ENCODE measurements at regions of chrX and their contacts with region 1.

Region 1: GRCh38 chrX:73562984-73563737 is at the start of gene CHIC1:
- DNase-seq: peak; percentile 85
- ATAC-seq: peak; percentile 67
- H3K4me3 ChIP-seq: peak within 1 kb of the TSS; percentile 58 to 77 (median 71)
- H3K4me3 Mint-ChIP-seq: peak within 1 kb of the TSS; percentile 93
- H3K27ac ChIP-seq: peak within 1 kb of the TSS; percentile 85 to 92
- H3K27ac Mint-ChIP-seq: peak within 1 kb of the TSS; percentile 99
- H3K4me1 ChIP-seq: peaks cover 7 to 13% of the 10 kb centered on the region in 2 donors
- H3K4me1 Mint-ChIP-seq: peaks cover 23% of the 10 kb centered on the region
- H3K27me3 ChIP-seq: no peaks in the 10 kb centered on the region
- H3K27me3 Mint-ChIP-seq: no peaks in the 10 kb centered on the region
- CTCF ChIP-seq: no peak
- total RNA-seq, gene CHIC1: 18.8 and 21.4 TPM in 2 replicates

Region 2: DNA sequence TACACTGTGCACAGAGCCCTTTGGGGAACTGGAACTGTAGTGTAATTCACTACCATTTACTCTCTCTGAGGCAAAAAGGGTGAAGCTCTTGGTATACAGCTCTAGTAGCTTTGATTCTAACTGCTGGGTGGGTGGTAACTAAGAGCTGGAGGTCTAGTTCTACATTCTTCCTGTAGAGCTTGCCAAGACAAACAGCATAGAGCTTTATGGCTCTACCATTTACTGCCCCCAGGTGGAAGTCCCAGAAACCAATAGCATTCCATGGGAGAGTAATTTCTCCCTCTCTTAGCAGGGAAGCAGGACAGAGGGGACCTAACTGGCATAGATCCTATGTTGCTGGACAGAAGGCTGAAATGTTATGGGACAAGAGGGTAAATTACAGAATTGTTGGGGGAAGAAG is 1017.2 kb before region 1 on chrX:
- CTCF ChIA-PET with region 1: no interaction called
- POLR2A ChIA-PET with region 1: no interaction called
- intact Hi-C with region 1: no loop called
- DNase-seq: no peak
- ATAC-seq: no peak
- H3K4me3 ChIP-seq: no peak overlapping the region
- H3K4me3 Mint-ChIP-seq: no peak overlapping the region
- H3K27ac ChIP-seq: no peak overlapping the region
- H3K27ac Mint-ChIP-seq: no peak overlapping the region
- H3K4me1 ChIP-seq: no peaks in the 10 kb centered on the region
- H3K4me1 Mint-ChIP-seq: no peaks in the 10 kb centered on the region
- H3K27me3 ChIP-seq: no peaks in the 10 kb centered on the region
- H3K27me3 Mint-ChIP-seq: no peaks in the 10 kb centered on the region
- CTCF ChIP-seq: no peak

Region 3: DNA sequence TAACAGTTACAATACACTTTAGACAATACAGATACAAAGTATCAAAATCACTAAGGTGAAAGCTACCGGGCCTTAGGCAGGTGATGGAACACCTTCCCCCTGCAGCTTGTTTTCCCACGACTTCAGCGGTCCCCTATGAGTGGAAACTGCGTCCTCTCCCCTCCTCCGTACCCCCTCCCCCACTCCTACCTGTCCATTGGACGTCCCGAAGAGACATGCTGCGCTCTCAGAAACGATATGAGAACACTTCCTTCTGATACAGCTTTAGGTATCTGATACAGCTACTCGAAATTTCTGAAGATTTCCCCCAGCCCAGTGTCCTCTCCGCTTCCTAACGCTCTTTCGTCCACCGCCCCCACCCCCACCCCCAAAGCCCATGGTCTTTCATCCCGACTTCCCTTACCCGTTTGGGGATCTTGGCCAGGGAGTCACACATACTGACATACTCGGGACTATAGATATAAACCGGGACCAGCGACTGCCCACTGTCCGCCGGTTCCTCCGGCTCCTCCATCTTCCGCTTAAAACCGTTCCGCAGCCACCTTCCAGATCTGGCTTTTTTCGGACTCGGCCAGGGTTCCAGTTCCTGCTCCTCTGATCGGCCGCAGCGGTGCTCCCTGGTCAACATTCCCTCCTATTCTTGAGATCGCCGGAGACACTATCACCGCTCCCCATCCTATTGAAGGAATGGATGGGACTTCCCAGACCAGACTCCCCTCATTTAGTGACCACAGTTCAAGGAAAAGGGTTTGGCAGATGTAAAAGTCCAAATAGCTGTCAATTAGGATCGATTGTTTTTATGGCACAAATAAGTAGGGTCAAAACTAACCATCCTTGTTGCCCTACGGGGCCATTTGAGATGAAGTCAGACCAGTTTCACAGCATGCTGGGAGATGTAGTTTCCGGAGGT is 990.7 kb before region 1 on chrX and contains the start of gene HDAC8:
- CTCF ChIA-PET with region 1: no interaction called
- POLR2A ChIA-PET with region 1: no interaction called
- intact Hi-C with region 1: loop called (anchors 5 kb)
- DNase-seq: peak; percentile 71
- ATAC-seq: peak; percentile 86
- H3K4me3 ChIP-seq: peak within 1 kb of the TSS; percentile 65 to 84 (median 82)
- H3K4me3 Mint-ChIP-seq: peak within 1 kb of the TSS; percentile 99
- H3K27ac ChIP-seq: peak within 1 kb of the TSS; percentile 50 to 75
- H3K27ac Mint-ChIP-seq: peak within 1 kb of the TSS; percentile 93
- H3K4me1 ChIP-seq: peaks cover 0 to 6% of the 10 kb centered on the region in 2 donors
- H3K4me1 Mint-ChIP-seq: peaks cover 12% of the 10 kb centered on the region
- H3K27me3 ChIP-seq: no peaks in the 10 kb centered on the region
- H3K27me3 Mint-ChIP-seq: peaks cover 18% of the 10 kb centered on the region
- CTCF ChIP-seq: no peak
- total RNA-seq, gene HDAC8: 41.9 and 47.0 TPM in 2 replicates

Region 4: DNA sequence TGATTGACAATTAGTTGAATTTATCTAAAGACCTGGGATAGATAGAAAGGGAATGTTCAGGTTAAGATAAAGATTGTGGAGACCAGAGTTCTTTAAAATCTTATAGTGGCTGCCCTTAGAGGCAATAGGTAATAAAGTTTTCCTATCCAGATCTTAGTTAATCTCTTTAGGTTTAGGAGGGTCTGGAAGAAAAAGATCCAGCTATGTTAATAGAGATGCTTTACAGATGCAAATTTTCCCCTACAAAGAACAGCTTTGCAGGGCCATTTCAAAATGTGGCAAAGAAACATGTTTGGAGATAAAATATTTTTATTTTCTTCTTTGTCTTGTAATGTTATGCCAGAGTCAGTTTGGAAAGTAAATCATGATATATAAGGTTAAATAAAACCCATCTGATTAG is 54.3 kb before region 1 on chrX:
- CTCF ChIA-PET with region 1: no interaction called
- POLR2A ChIA-PET with region 1: no interaction called
- intact Hi-C with region 1: no loop called
- DNase-seq: no peak
- ATAC-seq: no peak
- H3K4me3 ChIP-seq: no peak overlapping the region
- H3K4me3 Mint-ChIP-seq: no peak overlapping the region
- H3K27ac ChIP-seq: no peak overlapping the region
- H3K27ac Mint-ChIP-seq: no peak overlapping the region
- H3K4me1 ChIP-seq: no peaks in the 10 kb centered on the region
- H3K4me1 Mint-ChIP-seq: no peaks in the 10 kb centered on the region
- H3K27me3 ChIP-seq: no peaks in the 10 kb centered on the region
- H3K27me3 Mint-ChIP-seq: no peaks in the 10 kb centered on the region
- CTCF ChIP-seq: no peak

Region 5: DNA sequence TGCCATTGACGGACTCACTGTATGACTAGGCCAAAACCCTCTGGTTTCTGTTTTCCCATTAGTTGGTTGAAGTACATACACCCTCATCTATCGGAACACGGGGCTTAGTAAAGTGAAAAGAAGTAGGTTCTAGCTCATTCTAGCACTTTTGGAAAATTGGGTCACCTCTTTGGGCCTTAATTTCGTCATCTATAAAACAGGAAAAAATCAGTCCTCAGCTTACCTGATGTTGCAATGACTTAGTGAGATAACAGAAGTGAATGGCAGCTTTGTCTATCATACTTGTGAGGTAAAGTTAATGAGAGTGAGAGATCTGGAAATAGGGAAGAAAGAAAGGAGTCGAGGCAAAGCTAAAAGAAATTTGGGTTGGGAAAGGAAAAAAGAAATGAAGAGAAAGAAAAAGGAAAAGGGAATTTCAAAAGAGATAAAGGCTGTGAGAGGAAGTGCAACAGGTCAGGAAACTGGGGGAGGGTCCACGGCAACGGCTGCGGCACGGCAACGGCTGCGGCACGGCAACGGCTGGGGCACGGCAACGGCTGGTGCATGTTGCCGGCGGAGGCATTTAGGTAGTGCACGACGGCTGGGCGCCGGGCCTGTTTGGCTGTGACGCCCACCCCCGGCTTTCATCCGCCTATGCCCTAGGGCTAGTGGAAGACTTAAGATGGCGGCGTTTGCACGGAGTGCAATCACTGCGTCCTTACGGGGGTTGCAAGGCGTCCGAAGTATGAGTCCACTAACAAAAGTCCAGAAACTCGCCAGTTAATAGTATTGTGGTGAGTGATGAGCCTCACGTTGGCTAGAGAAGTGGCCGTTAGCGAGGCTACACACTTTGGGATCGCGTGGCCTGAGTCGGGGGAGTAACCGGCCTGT is 380.8 kb after region 1 on chrX:
- CTCF ChIA-PET with region 1: no interaction called
- POLR2A ChIA-PET with region 1: no interaction called
- intact Hi-C with region 1: loop called (anchors 2 kb)
- DNase-seq: peak; percentile 87
- ATAC-seq: peak; percentile 99
- H3K4me3 ChIP-seq: peak overlapping the region; percentile 72 to 98 (median 95)
- H3K4me3 Mint-ChIP-seq: peak overlapping the region; percentile 97
- H3K27ac ChIP-seq: peak overlapping the region; percentile 65 to 86
- H3K27ac Mint-ChIP-seq: peak overlapping the region; percentile 95
- H3K4me1 ChIP-seq: peaks cover 7 to 16% of the 10 kb centered on the region in 2 donors
- H3K4me1 Mint-ChIP-seq: peaks cover 23% of the 10 kb centered on the region
- H3K27me3 ChIP-seq: no peaks in the 10 kb centered on the region
- H3K27me3 Mint-ChIP-seq: no peaks in the 10 kb centered on the region
- CTCF ChIP-seq: no peak

Region 6: GRCh38 chrX:73987166-73987565 is 424.0 kb after region 1 on chrX:
- CTCF ChIA-PET with region 1: no interaction called
- POLR2A ChIA-PET with region 1: no interaction called
- intact Hi-C with region 1: no loop called
- DNase-seq: no peak
- ATAC-seq: no peak
- H3K4me3 ChIP-seq: no peak overlapping the region
- H3K4me3 Mint-ChIP-seq: no peak overlapping the region
- H3K27ac ChIP-seq: no peak overlapping the region
- H3K27ac Mint-ChIP-seq: no peak overlapping the region
- H3K4me1 ChIP-seq: no peaks in the 10 kb centered on the region
- H3K4me1 Mint-ChIP-seq: no peaks in the 10 kb centered on the region
- H3K27me3 ChIP-seq: no peaks in the 10 kb centered on the region
- H3K27me3 Mint-ChIP-seq: no peaks in the 10 kb centered on the region
- CTCF ChIP-seq: no peak

Region 7: DNA sequence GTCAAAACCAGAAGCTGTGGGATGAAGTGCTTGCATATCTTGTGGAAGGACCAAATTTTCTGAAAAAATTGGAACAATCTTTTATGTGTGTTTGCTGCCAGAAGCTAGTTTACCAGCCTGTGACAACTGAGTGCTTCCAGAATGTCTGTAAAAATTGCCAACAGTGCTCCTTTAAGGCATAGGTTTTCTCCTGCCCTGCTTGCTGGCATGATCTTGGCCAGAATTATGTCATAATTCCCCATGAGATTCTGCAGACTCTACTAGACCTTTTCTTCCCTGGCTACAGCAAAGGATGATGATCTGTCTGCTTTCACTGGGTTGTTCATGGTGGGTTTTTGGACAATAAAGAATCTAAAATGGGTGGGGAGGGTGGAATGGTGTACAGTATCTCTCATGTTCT is 544.5 kb after region 1 on chrX:
- CTCF ChIA-PET with region 1: no interaction called
- POLR2A ChIA-PET with region 1: no interaction called
- intact Hi-C with region 1: no loop called
- DNase-seq: no peak
- ATAC-seq: no peak
- H3K4me3 ChIP-seq: no peak overlapping the region
- H3K4me3 Mint-ChIP-seq: no peak overlapping the region
- H3K27ac ChIP-seq: no peak overlapping the region
- H3K27ac Mint-ChIP-seq: no peak overlapping the region
- H3K4me1 ChIP-seq: no peaks in the 10 kb centered on the region
- H3K4me1 Mint-ChIP-seq: no peaks in the 10 kb centered on the region
- H3K27me3 ChIP-seq: no peaks in the 10 kb centered on the region
- H3K27me3 Mint-ChIP-seq: no peaks in the 10 kb centered on the region
- CTCF ChIP-seq: no peak

Region 8: GRCh38 chrX:74291964-74292807 is 729.0 kb after region 1 on chrX:
- CTCF ChIA-PET with region 1: no interaction called
- POLR2A ChIA-PET with region 1: no interaction called
- intact Hi-C with region 1: loop called (anchors 10 kb)
- DNase-seq: peak; percentile 92
- ATAC-seq: peak; percentile 88
- H3K4me3 ChIP-seq: peak overlapping the region; percentile 78 to 87 (median 80)
- H3K4me3 Mint-ChIP-seq: peak overlapping the region; percentile 99
- H3K27ac ChIP-seq: peak overlapping the region; percentile 77 to 81
- H3K27ac Mint-ChIP-seq: peak overlapping the region; percentile 98
- H3K4me1 ChIP-seq: peaks cover 3 to 6% of the 10 kb centered on the region in 2 donors
- H3K4me1 Mint-ChIP-seq: peaks cover 18% of the 10 kb centered on the region
- H3K27me3 ChIP-seq: no peaks in the 10 kb centered on the region
- H3K27me3 Mint-ChIP-seq: no peaks in the 10 kb centered on the region
- CTCF ChIP-seq: no peak

Measured in B cell (primary cell).